GM23248 (cell line): ENCODE measurements at regions of chr2 and their contacts with region 1.

Region 1: GRCh38 chr2:219308142-219309093 is 783 bp downstream of the PTPRN start:
- DNase-seq: peak; percentile 82
- H3K4me3 ChIP-seq: peak overlapping the region; percentile 63
- H3K27ac ChIP-seq: peak overlapping the region; percentile 30; the same call in 1 of the 2 replicates
- H3K4me1 ChIP-seq: no peaks in the 10 kb centered on the region; the same call in none of the 2 replicates
- H3K27me3 ChIP-seq: 0 out of 2 replicates have a peak, but pooled peaks cover 3% of the 10 kb centered on the region

Region 2: GRCh38 chr2:219160186-219161017 is 148.0 kb before region 1 on chr2 and contains the start of gene NHEJ1:
- in situ Hi-C with region 1: loop called (anchors 10 kb)
- DNase-seq: peak; percentile 95
- H3K4me3 ChIP-seq: peak within 1 kb of the TSS; percentile 72
- H3K27ac ChIP-seq: peak within 1 kb of the TSS; percentile 74
- H3K4me1 ChIP-seq: peaks cover 14% of the 10 kb centered on the region
- H3K27me3 ChIP-seq: no peaks in the 10 kb centered on the region
- total RNA-seq, gene NHEJ1: 8.3 and 16.1 TPM in 2 replicates